Caco-2 (cell line): ENCODE measurements at regions of chr16 and their contacts with region 1.

Region 1: DNA sequence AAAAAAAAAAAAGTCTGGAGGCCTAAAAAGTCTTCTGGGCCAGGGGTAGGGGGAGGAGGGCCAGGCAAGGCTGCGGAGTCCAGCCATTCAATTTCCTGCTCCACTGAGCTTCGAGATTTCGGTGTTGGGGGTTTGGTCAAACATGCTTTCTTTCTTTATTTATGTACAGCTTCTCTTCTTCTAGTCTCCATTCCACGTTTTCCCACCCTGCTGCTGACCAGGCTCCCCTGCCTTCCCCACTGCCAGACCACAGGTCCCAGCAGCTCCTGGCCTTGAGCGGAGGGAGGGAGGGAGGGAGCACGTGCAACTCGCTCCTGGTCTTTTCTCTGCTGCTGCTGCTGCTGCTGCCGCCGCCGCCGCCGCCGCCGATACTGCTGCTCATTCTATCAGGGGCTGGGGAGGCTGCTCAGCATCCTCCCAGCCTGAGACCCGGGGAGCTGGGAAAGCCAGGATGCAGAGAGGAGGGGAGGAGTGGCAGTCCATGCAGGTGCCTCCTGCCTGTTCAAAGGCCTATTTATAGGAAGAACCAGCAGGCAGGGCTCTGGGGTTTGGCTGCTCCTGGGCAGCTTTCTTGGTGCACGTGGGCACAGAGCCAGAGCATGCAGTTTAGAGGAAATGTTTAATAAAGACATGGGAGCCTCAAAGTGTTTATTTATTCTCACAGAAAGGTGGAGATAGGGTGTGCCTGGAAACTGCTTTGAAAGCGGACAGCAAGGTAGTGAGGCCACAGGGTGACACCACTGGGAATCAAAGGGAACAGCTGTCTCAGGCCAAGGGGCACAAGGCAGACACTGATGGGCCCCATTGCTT is 23.4 kb upstream of the ZFHX3 start:
- DNase-seq: peak in 1 of 2 experiments; percentile 33
- H3K4me3 ChIP-seq: peak overlapping the region; percentile 19
- H3K4me3 Mint-ChIP-seq: peak overlapping the region; percentile 95
- H3K27ac Mint-ChIP-seq: peak overlapping the region; percentile 97
- H3K4me1 ChIP-seq: peaks cover 16% of the 10 kb centered on the region
- H3K4me1 Mint-ChIP-seq: peaks cover 21% of the 10 kb centered on the region
- H3K27me3 ChIP-seq: no peaks in the 10 kb centered on the region
- H3K27me3 Mint-ChIP-seq: no peaks in the 10 kb centered on the region
- CTCF ChIP-seq: no peak

Region 2: GRCh38 chr16:73172241-73172972 is 101.1 kb after region 1 on chr16:
- CTCF ChIA-PET with region 1: no interaction called
- POLR2A ChIA-PET with region 1: no interaction called
- intact Hi-C with region 1: loop called (anchors 5 kb)
- DNase-seq: no peak
- H3K4me3 ChIP-seq: no peak overlapping the region
- H3K4me3 Mint-ChIP-seq: no peak overlapping the region
- H3K27ac Mint-ChIP-seq: no peak overlapping the region
- H3K4me1 ChIP-seq: 0 out of 2 replicates have a peak, but pooled peaks cover 7% of the 10 kb centered on the region
- H3K4me1 Mint-ChIP-seq: peaks cover 7% of the 10 kb centered on the region
- H3K27me3 ChIP-seq: no peaks in the 10 kb centered on the region
- H3K27me3 Mint-ChIP-seq: peaks cover 5% of the 10 kb centered on the region
- CTCF ChIP-seq: peak in 1 of 2 experiments; percentile 43

Region 3: DNA sequence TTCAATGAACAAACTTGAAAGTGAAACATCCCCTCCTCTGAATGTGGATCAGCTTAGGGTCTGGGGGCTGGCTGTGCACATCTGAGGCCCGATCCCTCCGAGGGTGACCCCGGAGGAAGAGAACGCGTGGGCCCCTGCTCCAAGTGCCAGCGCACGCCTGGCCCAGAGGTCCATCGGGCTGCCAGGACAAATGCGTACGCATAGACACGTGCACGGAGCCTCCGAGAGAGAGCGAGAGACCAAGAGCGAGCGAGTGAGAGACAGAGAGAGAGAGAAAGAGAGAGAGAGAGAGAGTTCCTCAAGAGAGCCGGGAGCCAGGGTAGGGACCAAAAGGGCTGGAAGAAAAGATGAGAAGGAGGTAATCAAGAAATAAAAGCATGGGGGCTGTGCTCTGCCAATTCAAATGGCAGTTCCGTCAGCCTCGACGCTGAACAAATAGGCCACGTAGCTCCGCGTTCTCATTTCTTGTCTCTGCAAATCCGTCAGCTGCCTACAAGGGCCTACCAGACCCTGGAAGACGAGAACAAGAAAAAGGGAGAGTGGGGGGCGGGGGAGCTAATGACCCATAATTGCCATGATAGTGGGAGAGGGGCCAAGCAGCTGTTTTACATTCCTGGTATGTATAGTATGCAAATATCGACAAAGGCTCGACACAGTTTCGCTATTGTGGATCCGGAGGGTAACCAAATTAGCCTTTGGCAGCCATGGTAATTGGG is 411.9 kb after region 1 on chr16:
- CTCF ChIA-PET with region 1: no interaction called
- POLR2A ChIA-PET with region 1: no interaction called
- intact Hi-C with region 1: no loop called
- DNase-seq: no peak
- H3K4me3 ChIP-seq: no peak overlapping the region
- H3K4me3 Mint-ChIP-seq: no peak overlapping the region
- H3K27ac Mint-ChIP-seq: no peak overlapping the region
- H3K4me1 ChIP-seq: no peaks in the 10 kb centered on the region
- H3K4me1 Mint-ChIP-seq: no peaks in the 10 kb centered on the region
- H3K27me3 ChIP-seq: no peaks in the 10 kb centered on the region
- H3K27me3 Mint-ChIP-seq: peaks cover 25% of the 10 kb centered on the region
- CTCF ChIP-seq: no peak